Mammary epithelial cell (primary cell): ENCODE measurements at regions of chr18 and their contacts with region 1.

Region 1: DNA sequence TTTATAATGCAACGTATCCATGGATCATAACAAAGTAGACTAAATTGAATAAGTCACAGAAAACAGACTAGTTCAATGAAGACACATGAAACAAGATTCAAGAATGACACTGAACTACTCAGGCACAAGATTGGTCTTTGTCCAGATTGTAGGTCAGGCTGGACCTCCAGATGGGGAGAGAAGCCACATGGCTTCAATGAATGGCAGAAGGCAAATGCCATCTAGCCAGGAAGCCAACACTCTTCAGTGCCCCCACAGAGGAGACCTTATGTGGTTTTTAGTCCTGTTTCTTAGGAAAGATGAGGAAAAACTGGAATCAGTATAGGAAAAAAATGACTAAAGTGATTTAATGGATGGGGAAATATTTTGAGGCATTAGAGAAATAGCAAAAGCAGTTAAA is 43.1 kb downstream of the BOD1L2 start:
- DNase-seq: no peak
- H3K4me3 ChIP-seq: no peak overlapping the region
- H3K27ac ChIP-seq: no peak overlapping the region
- H3K4me1 ChIP-seq: no peaks in the 10 kb centered on the region
- H3K27me3 ChIP-seq: peaks cover 5% of the 10 kb centered on the region
- CTCF ChIP-seq: no peak

Region 2: GRCh38 chr18:56995579-56996188 is 194.3 kb before region 1 on chr18:
- CTCF ChIA-PET with region 1: no interaction called
- dilution Hi-C with region 1: no loop called
- in situ Hi-C with region 1: no loop called
- intact Hi-C with region 1: no loop called
- DNase-seq: no peak
- H3K4me3 ChIP-seq: no peak overlapping the region
- H3K27ac ChIP-seq: no peak overlapping the region
- H3K4me1 ChIP-seq: peaks cover 5% of the 10 kb centered on the region
- H3K27me3 ChIP-seq: no peaks in the 10 kb centered on the region
- CTCF ChIP-seq: peak in 1 of 2 donors; percentile 15

Region 3: GRCh38 chr18:57149531-57149930 is 40.5 kb before region 1 on chr18:
- CTCF ChIA-PET with region 1: no interaction called
- dilution Hi-C with region 1: loop called (anchors 5 kb)
- in situ Hi-C with region 1: no loop called
- intact Hi-C with region 1: no loop called
- DNase-seq: no peak
- H3K4me3 ChIP-seq: no peak overlapping the region
- H3K27ac ChIP-seq: no peak overlapping the region
- H3K4me1 ChIP-seq: no peaks in the 10 kb centered on the region
- H3K27me3 ChIP-seq: peaks cover 3% of the 10 kb centered on the region
- CTCF ChIP-seq: no peak